ENCODE measurements at regions of chr17 and their contacts with region 1.

Region 1: GRCh38 chr17:78840725-78841611 is at the start of gene USP36:
- DNase-seq: peak; percentile 100
- H3K4me3 ChIP-seq: peak within 1 kb of the TSS; percentile 76 to 100 (median 97)
- H3K27ac ChIP-seq: peak within 1 kb of the TSS; percentile 88 to 100 (median 97)
- H3K27me3 ChIP-seq: no peaks in the 10 kb centered on the region
- CTCF ChIP-seq: peak in 27 of 56 donors; percentile 5 to 53 (median 29)
- total RNA-seq, gene USP36: 39.1 to 90.9 (median 60.5) TPM

Region 2: GRCh38 chr17:78645421-78646295 is 195.3 kb before region 1 on chr17:
- intact Hi-C with region 1: no loop called
- DNase-seq: peak in 6 of 10 donors; percentile 30 to 57 (median 42)
- H3K4me3 ChIP-seq: no peak overlapping the region
- H3K27ac ChIP-seq: peak overlapping the region in 29 of 59 donors; percentile 21 to 80 (median 45)
- H3K27me3 ChIP-seq: no peaks in the 10 kb centered on the region
- CTCF ChIP-seq: no peak

Region 3: DNA sequence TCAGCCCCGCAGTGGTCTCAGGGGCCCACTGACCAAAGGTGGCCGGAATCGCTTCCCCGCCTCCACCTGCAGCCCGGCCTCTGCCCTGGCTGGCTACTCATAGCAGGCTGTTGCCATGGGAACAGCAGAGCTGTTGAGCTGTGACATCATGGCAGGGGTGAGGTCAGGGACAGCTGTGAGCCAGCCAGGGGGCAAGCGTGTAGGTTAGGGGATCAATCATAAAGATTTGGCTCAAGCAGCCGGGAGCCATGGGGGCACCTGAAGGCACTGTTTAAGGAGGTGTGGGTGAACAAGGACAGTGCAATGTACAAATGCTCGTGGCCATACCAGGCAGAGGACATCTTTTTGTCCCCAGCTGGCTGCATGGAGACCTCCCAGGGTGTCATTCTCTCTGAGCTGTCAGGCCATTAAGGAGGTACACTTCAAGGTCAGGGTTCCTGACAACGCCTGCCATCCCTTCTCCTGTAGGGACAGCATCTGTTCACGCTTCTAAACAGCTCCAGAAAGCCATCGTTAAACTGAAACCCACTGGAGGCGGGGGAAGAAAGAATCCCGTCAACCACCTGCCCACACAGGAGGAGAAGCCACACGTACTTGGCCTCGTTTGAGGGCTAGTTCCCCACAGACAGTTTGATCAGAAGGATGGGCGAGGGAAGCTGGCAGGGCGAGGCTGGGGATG is 62.3 kb after region 1 on chr17 and contains the start of gene CEP295NL:
- intact Hi-C with region 1: no loop called
- DNase-seq: no peak
- H3K4me3 ChIP-seq: no peak within 1 kb of the TSS
- H3K27ac ChIP-seq: peak within 1 kb of the TSS in 49 of 59 donors; percentile 2 to 100 (median 63)
- H3K27me3 ChIP-seq: no peaks in the 10 kb centered on the region
- CTCF ChIP-seq: no peak
- total RNA-seq, gene CEP295NL: 2.1 to 18.2 (median 6.7) TPM

Region 4: GRCh38 chr17:79065105-79065670 is 224.2 kb after region 1 on chr17:
- intact Hi-C with region 1: loop called in 1 of 2 experiments (anchors 10 kb)
- DNase-seq: peak in 4 of 10 donors; percentile 44 to 58 (median 49)
- H3K4me3 ChIP-seq: no peak overlapping the region
- H3K27ac ChIP-seq: no peak overlapping the region
- H3K27me3 ChIP-seq: no peaks in the 10 kb centered on the region
- CTCF ChIP-seq: peak; percentile 33 to 81 (median 67)

Region 5: DNA sequence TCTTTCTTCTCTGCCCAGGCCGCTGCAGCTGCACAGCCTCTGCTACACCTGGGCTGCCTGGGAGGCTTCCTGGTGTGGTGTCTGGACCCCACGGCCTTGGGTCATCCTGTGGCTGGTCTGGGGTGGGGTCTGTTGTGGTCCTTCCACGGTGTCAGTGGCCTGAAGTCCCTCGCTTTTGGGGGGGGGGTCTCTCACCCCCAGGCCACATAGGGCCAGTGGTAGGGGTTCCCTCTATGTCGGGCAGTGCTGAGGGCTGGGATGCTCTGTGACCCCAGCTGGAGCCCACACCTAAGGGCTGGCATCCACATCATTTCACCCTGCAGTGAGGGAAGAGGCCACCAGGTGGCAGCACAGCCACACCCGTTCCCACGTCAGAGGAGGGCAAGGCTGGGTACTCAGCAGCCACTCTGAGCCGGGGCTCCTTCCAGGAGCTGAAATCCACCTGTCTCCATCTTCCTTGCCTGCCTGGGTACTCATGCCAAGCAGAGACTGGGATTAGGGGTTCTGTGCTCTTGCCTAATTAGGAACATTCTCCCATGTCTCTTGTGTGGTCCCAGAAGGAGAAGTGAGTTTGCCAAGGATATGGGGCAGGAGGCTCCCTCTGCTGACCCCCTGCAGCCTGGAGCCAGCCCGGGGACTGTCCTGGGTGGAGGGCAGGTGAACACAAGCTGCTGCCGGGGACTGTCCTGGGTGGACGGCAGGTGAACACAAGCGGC is 246.6 kb after region 1 on chr17:
- intact Hi-C with region 1: no loop called
- DNase-seq: peak; percentile 68 to 91 (median 80)
- H3K4me3 ChIP-seq: peak overlapping the region in 1 of 59 donors; percentile 3
- H3K27ac ChIP-seq: peak overlapping the region in 13 of 59 donors; percentile 14 to 72 (median 40)
- H3K27me3 ChIP-seq: peaks cover 0 to 7% (median 0%) of the 10 kb centered on the region in 45 donors
- CTCF ChIP-seq: peak; percentile 63 to 97 (median 92)

Region 6: DNA sequence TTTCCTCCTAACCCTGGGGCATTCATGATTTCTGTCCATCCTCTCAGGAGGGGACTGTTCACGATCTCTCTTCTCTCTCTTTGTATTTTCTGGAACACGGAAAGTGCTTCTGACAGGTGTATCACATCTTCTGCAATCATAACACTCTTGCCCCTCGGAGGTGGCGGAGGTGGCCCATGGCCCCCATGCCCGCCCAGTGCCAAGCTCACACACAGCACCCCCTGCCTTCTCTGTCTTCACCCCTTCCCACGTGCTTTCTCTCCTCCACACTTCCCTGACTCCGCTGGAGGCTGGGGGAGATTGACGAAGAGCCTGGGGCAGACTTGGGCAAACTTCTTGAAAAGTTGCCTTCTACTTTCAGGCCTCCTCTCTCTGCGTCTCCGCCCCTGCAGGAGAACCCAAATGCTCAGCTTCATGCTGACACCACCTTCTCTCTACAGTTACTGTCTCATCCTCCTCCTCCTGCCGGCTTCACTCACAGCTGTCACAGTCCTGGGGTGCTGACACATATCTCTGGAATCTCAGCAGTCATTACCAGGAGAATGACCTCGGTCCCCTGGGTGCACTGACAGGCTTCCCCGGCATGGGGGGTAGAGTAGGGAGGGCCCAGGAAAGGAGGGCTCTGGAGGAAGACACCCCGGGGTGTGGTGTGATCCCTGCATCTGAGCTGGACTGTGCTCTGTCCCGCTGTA is 360.7 kb after region 1 on chr17:
- intact Hi-C with region 1: no loop called
- DNase-seq: no peak
- H3K4me3 ChIP-seq: no peak overlapping the region
- H3K27ac ChIP-seq: peak overlapping the region in 4 of 59 donors; percentile 26 to 53 (median 30)
- H3K27me3 ChIP-seq: peaks cover 0 to 43% (median 0%) of the 10 kb centered on the region in 45 donors
- CTCF ChIP-seq: no peak

Measured in dorsolateral prefrontal cortex (tissue), 120 donors.